Psoas muscle (tissue), 8 donors: ENCODE measurements at regions of chr20 and their contacts with region 1.

Region 1: GRCh38 chr20:13771853-13772453 is 12.8 kb downstream of the ESF1 start:
- DNase-seq: no peak
- ATAC-seq: peak in 1 of 4 donors; percentile 65
- H3K4me3 ChIP-seq: no peak overlapping the region
- H3K27ac ChIP-seq: no peak overlapping the region
- H3K4me1 ChIP-seq: peaks cover 4% of the 10 kb centered on the region
- H3K27me3 ChIP-seq: no peaks in the 10 kb centered on the region
- CTCF ChIP-seq: peak; percentile 59

Region 2: GRCh38 chr20:13464702-13465101 is 307.3 kb before region 1 on chr20:
- intact Hi-C with region 1: loop called in 1 of 2 experiments (anchors 5 kb)
- DNase-seq: no peak
- ATAC-seq: no peak
- H3K4me3 ChIP-seq: no peak overlapping the region
- H3K27ac ChIP-seq: no peak overlapping the region
- H3K4me1 ChIP-seq: no peaks in the 10 kb centered on the region
- H3K27me3 ChIP-seq: no peaks in the 10 kb centered on the region
- CTCF ChIP-seq: no peak

Region 3: GRCh38 chr20:13571662-13572061 is 200.3 kb before region 1 on chr20:
- intact Hi-C with region 1: no loop called
- DNase-seq: no peak
- ATAC-seq: no peak
- H3K4me3 ChIP-seq: no peak overlapping the region
- H3K27ac ChIP-seq: no peak overlapping the region
- H3K4me1 ChIP-seq: peaks cover 6% of the 10 kb centered on the region
- H3K27me3 ChIP-seq: no peaks in the 10 kb centered on the region
- CTCF ChIP-seq: no peak

Region 4: DNA sequence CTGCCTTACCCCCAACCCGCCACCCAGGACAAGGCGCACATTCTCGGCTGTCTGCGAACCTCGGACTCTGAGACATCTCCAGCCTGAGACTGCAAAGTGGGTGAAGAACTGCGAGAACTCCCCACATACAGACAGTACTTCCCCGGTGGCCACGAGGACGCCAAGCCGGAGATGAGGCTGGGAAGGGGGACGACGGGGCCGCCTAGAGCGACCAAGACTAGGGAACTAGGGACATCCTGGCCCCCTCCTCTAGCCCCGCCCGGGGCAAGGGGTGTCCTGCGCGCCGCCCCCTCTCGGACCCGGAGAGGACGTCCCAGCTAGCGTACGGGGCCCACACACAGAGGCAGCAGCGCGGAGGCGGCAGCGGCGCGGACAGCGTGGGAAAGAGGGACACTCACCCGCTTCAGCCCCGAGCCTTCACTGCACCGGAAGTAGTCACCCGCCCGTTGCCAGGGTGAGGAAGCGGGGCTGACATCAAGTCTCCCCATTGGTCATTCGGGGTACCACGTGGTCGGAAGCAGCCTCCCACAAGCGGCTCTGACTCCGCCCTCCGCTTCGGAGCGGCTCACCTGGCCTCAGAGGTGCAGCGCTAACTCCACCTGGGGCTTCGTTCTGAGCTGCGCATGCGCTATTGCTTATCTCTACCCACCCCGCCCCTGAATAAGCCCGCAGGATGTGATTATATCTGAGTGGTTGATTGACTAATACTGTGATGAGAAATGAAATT is 133.3 kb before region 1 on chr20 and contains the start of gene TASP1:
- intact Hi-C with region 1: loop called in 1 of 2 experiments (anchors 10 kb)
- DNase-seq: peak; percentile 94 to 97
- ATAC-seq: peak; percentile 100
- H3K4me3 ChIP-seq: peak within 1 kb of the TSS; percentile 97
- H3K27ac ChIP-seq: peak within 1 kb of the TSS; percentile 70
- H3K4me1 ChIP-seq: no peaks in the 10 kb centered on the region
- H3K27me3 ChIP-seq: peaks cover 0 to 6% (median 0%) of the 10 kb centered on the region in 3 donors
- CTCF ChIP-seq: no peak
- total RNA-seq, gene TASP1: 2.9 to 4.8 (median 3.4) TPM